Left cardiac atrium (tissue), 4 donors: ENCODE measurements at regions of chr11 and their contacts with region 1.

Region 1: DNA sequence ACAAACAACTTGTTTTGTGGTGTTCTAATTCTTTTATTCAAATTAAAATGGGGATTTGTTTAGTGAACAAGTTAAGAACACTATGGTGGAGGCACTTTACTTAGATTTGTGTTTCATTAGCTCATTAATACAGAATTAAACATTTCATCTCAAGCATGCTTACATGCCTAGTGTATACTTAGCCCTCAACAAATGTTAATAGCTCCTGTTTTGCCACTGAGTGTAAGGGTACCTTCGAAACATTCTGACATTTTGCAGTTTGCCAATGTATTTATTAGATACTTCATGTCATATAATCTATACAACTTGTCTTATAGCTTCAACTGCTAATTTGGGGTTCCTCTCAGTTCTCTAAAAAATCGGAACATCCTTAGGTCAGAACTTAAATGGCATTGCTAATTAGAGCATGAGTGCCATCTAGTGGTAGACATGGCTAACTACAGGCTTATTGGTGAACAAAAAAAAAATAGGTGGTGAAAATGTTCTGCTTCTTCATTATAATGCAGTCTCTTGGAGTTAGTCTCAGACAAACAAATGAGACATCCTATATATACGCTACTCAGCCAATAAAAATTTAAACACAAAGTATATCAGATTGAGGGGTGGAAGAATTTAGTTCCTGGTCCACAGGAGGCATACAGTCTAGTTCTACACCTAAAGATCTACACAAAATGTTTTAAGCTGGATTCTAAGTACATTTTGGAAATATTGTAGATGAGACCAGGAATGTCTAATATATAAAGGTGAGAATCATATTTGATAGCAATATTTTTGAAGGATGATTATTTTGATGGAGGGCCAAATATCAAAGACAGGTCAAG is 4.9 kb upstream of the CNTN5 start:
- DNase-seq: no peak
- ATAC-seq: peak in 1 of 2 donors; percentile 34

Region 2: DNA sequence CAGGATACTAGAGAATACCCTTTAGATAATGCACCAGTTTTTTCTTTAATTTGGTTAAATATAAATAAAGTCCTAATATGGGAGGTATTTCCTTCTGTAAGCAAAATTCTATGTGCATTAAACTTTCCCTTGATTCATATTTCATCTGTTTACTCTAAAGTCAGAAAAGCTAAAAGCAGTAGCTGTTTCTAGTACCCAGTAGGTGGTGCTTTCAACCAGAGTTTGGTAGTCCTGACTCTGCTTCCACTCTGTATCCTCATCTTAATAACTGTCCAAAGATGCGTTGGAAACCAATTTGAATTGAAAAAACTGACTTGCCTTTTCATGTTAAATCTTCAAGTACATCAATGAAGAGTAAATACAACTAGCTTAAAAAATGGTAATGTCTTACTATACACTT is 1560.9 kb before region 1 on chr11:
- intact Hi-C with region 1: loop called in 1 of 2 experiments (anchors 10 kb)
- DNase-seq: no peak
- ATAC-seq: no peak

Region 3: DNA sequence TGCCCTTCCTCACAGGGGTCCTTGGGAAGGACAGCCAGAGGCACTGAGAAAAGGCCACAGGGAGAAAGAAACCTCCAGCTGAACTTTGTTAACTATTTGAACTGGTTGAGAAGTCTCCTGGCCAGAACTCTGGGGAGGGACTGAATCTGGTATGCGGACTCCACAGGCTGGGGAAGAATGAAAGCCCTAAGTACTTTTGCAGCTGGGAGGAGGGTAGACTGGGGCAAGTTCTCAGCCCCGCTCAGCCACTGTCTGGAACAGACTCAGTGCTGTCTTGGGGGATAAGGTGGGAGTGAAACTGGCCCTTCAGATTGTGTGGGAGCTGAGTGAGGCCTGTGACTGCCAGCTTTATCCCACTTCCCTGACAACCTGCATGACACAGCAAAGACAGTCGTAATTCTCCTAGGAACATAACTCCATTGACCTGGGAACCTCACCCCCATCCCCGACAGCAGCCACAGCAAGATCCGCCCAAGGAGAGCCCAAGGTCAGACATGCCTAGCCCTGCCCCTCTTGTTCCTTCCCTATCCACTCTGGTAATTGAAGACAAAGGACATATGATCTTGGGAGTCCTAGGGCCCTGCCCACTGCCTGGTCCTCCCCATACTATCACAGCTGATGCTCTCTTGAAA is 470.2 kb before region 1 on chr11:
- intact Hi-C with region 1: no loop called
- DNase-seq: no peak
- ATAC-seq: peak in 1 of 2 donors; percentile 51

Region 4: GRCh38 chr11:99277281-99277680 is 261.4 kb after region 1 on chr11:
- intact Hi-C with region 1: no loop called
- DNase-seq: no peak
- ATAC-seq: no peak